ENCODE measurements at regions of chr5 and their contacts with region 1.

Region 1: DNA sequence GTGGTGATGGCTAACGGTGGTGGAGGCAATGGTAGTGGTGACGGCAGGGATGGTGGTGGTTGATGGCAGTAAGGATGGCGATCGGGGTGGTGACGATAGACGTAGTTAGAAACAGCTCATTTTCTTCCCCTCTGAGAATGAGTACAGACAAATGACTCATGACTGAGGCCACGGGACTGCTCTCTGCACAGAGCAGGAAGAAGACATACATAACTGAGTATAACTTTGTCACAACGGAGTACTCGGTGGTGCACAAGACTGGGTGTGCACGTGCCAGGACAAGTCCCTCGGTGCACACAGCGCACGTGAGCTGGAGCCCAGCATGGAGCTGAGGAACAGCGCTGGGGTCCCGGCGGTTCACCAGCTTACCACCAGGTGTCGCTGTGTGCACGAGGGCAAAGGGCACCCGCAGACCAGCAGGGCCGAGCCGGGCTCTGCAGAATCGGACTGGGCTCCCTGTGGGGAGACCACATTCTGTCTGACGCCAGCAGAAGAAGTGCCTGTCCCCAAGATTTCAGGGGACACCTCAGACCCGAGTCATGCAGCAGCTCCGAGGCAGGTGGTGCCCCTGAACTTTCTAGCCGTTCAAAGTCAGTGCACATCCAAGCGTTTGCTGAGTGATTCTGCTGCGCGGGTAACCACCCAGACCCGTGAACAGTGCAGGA is 188.6 kb downstream of the FSTL4 start:
- DNase-seq: peak; percentile 91
- ATAC-seq: peak; percentile 80
- H3K4me3 Mint-ChIP-seq: no peak overlapping the region
- H3K27ac Mint-ChIP-seq: no peak overlapping the region
- H3K4me1 Mint-ChIP-seq: peaks cover 48% of the 10 kb centered on the region
- H3K27me3 Mint-ChIP-seq: peaks cover 33% of the 10 kb centered on the region
- CTCF ChIP-seq: peak; percentile 96

Region 2: GRCh38 chr5:133154274-133155074 is 269.3 kb before region 1 on chr5:
- CTCF ChIA-PET with region 1: no interaction called
- POLR2A ChIA-PET with region 1: no interaction called
- DNase-seq: no peak
- ATAC-seq: no peak
- H3K4me3 Mint-ChIP-seq: no peak overlapping the region
- H3K27ac Mint-ChIP-seq: no peak overlapping the region
- H3K4me1 Mint-ChIP-seq: no peaks in the 10 kb centered on the region
- H3K27me3 Mint-ChIP-seq: no peaks in the 10 kb centered on the region
- CTCF ChIP-seq: no peak

Region 3: GRCh38 chr5:133316427-133316826 is 107.3 kb before region 1 on chr5:
- CTCF ChIA-PET with region 1: interaction called, 20 read pairs
- POLR2A ChIA-PET with region 1: no interaction called
- DNase-seq: peak; percentile 74
- ATAC-seq: peak; percentile 81
- H3K4me3 Mint-ChIP-seq: no peak overlapping the region
- H3K27ac Mint-ChIP-seq: no peak overlapping the region
- H3K4me1 Mint-ChIP-seq: peaks cover 31% of the 10 kb centered on the region
- H3K27me3 Mint-ChIP-seq: no peaks in the 10 kb centered on the region; the same call in 1 of the 2 replicates
- CTCF ChIP-seq: no peak

Region 4: GRCh38 chr5:133396814-133397213 is 26.9 kb before region 1 on chr5:
- CTCF ChIA-PET with region 1: interaction called, 16 read pairs
- POLR2A ChIA-PET with region 1: no interaction called
- DNase-seq: no peak
- ATAC-seq: no peak
- H3K4me3 Mint-ChIP-seq: no peak overlapping the region
- H3K27ac Mint-ChIP-seq: no peak overlapping the region
- H3K4me1 Mint-ChIP-seq: peaks cover 30% of the 10 kb centered on the region
- H3K27me3 Mint-ChIP-seq: peaks cover 3% of the 10 kb centered on the region; the same call in 1 of the 2 replicates
- CTCF ChIP-seq: no peak

Region 5: DNA sequence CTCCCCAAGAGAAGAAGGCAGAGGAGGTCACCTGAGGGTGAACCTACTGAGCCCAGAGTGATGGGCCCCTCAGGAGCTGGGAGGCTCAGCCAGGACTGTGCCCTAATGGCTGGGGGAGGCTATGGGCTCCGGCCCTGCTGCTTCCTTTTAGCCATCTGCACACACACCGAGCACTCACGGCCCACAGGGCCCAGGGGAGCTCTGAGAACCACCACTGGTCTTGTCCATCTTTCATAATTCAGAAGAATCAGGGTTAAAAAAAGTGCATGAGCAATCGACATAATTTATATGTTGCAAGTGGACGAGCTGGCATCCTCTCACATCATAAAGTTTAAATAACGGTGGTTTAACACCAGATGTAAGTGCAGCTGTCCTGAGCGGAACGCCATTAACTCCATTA is 26.5 kb after region 1 on chr5:
- CTCF ChIA-PET with region 1: interaction called, 15 read pairs
- POLR2A ChIA-PET with region 1: interaction called, 3 read pairs
- DNase-seq: no peak
- ATAC-seq: no peak
- H3K4me3 Mint-ChIP-seq: no peak overlapping the region
- H3K27ac Mint-ChIP-seq: 0 out of 2 replicates have a peak overlapping the region, but pooled peaks have one; percentile 28
- H3K4me1 Mint-ChIP-seq: no peaks in the 10 kb centered on the region
- H3K27me3 Mint-ChIP-seq: no peaks in the 10 kb centered on the region; the same call in 1 of the 2 replicates
- CTCF ChIP-seq: no peak

Region 6: GRCh38 chr5:133525126-133525525 is 101.4 kb after region 1 on chr5:
- CTCF ChIA-PET with region 1: interaction called, 10 read pairs
- POLR2A ChIA-PET with region 1: no interaction called
- DNase-seq: no peak
- ATAC-seq: no peak; the same call in 1 of the 2 replicates
- H3K4me3 Mint-ChIP-seq: no peak overlapping the region
- H3K27ac Mint-ChIP-seq: no peak overlapping the region
- H3K4me1 Mint-ChIP-seq: peaks cover 23% of the 10 kb centered on the region
- H3K27me3 Mint-ChIP-seq: no peaks in the 10 kb centered on the region; the same call in 1 of the 2 replicates
- CTCF ChIP-seq: no peak

Region 7: GRCh38 chr5:133944263-133945185 is 520.8 kb after region 1 on chr5:
- CTCF ChIA-PET with region 1: interaction called, 11 read pairs
- POLR2A ChIA-PET with region 1: no interaction called
- DNase-seq: peak; percentile 74
- ATAC-seq: peak; percentile 95
- H3K4me3 Mint-ChIP-seq: no peak overlapping the region
- H3K27ac Mint-ChIP-seq: no peak overlapping the region
- H3K4me1 Mint-ChIP-seq: peaks cover 3% of the 10 kb centered on the region; the same call in 1 of the 2 replicates
- H3K27me3 Mint-ChIP-seq: no peaks in the 10 kb centered on the region
- CTCF ChIP-seq: peak; percentile 74

Measured in WTC11 (cell line).